CD4-positive, alpha-beta T cell (primary cell): ENCODE measurements at regions of chr3 and their contacts with region 1.

Region 1: DNA sequence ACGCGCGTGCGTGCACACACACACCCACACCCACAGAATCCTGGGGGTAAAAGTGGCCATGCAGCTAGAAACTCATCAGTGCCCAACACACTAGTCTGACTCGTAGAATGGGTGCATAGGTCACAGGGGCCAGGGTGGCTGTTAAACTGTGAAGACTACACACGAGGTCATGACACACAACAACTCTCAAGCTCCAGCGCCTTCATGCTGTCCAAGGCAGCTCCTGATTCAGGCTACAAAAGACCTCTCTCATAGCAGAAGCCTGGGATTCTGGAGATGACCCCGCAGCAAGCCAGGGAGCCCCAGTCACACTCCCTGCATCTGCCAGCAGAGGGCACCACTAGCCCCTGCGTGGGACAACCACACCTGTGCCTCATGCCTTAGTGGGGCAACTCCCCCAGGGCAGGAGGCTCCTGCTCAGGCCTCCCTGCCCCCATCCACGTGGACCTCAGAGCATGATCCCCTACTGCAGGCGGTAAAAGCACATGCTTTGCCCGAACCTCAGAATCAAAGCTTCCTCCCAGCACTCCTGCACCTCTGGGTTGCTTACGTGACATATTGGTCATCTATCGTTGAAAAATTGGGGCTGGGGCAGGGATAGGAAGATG is 93.1 kb downstream of the LRIG1 start:
- DNase-seq: peak; percentile 56 to 82 (median 74)
- ATAC-seq: peak; percentile 86
- H3K4me3 ChIP-seq: no peak overlapping the region
- H3K4me3 Mint-ChIP-seq: no peak overlapping the region
- H3K27ac ChIP-seq: no peak overlapping the region
- H3K27ac Mint-ChIP-seq: no peak overlapping the region
- H3K4me1 ChIP-seq: peaks cover 3% of the 10 kb centered on the region
- H3K4me1 Mint-ChIP-seq: no peaks in the 10 kb centered on the region
- H3K27me3 ChIP-seq: no peaks in the 10 kb centered on the region
- H3K27me3 Mint-ChIP-seq: no peaks in the 10 kb centered on the region
- CTCF ChIP-seq: peak; percentile 90

Region 2: GRCh38 chr3:66365080-66365479 is 42.6 kb before region 1 on chr3:
- CTCF ChIA-PET with region 1: no interaction called
- POLR2A ChIA-PET with region 1: no interaction called
- intact Hi-C with region 1: no loop called
- DNase-seq: no peak
- ATAC-seq: no peak
- H3K4me3 ChIP-seq: no peak overlapping the region
- H3K4me3 Mint-ChIP-seq: no peak overlapping the region
- H3K27ac ChIP-seq: no peak overlapping the region
- H3K27ac Mint-ChIP-seq: no peak overlapping the region
- H3K4me1 ChIP-seq: no peaks in the 10 kb centered on the region
- H3K4me1 Mint-ChIP-seq: no peaks in the 10 kb centered on the region
- H3K27me3 ChIP-seq: no peaks in the 10 kb centered on the region
- H3K27me3 Mint-ChIP-seq: no peaks in the 10 kb centered on the region
- CTCF ChIP-seq: no peak

Region 3: DNA sequence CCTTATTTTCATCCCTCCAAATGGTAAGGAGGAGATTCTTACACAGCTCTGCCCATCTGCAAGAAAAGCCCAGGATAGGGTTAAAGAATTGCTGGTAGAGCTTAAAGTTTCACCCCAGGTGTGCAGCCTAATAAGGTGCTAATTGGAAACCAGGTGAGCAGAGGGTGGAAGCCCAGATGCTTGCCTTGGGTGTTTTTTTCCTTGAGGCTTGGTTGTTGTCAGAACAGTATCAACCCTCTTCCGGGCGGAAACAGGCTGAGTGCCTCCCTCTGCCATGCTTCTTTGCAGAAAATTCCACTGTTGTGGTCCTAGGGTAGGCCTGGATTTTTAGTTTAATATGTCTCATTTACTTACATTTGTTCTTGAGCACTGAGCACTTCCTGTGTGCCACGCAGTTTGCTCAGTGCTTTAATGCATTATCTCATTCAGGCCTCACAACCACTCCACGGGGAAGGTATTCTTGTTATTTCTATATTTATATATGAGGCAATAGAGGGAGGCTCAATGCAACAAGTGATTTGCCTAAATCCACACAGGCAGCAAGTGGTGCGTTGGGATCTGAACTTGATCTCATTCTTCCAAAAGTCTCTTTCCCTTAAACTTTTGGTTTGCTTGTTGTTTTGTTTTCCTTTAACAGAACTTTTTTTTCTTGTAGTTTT is 208.1 kb after region 1 on chr3:
- CTCF ChIA-PET with region 1: no interaction called
- POLR2A ChIA-PET with region 1: no interaction called
- intact Hi-C with region 1: no loop called
- DNase-seq: peak in 1 of 14 experiments; percentile 14
- ATAC-seq: peak; percentile 21
- H3K4me3 ChIP-seq: no peak overlapping the region
- H3K4me3 Mint-ChIP-seq: no peak overlapping the region
- H3K27ac ChIP-seq: no peak overlapping the region
- H3K27ac Mint-ChIP-seq: no peak overlapping the region
- H3K4me1 ChIP-seq: peaks cover 17% of the 10 kb centered on the region
- H3K4me1 Mint-ChIP-seq: peaks cover 21% of the 10 kb centered on the region
- H3K27me3 ChIP-seq: no peaks in the 10 kb centered on the region
- H3K27me3 Mint-ChIP-seq: no peaks in the 10 kb centered on the region
- CTCF ChIP-seq: no peak

Region 4: DNA sequence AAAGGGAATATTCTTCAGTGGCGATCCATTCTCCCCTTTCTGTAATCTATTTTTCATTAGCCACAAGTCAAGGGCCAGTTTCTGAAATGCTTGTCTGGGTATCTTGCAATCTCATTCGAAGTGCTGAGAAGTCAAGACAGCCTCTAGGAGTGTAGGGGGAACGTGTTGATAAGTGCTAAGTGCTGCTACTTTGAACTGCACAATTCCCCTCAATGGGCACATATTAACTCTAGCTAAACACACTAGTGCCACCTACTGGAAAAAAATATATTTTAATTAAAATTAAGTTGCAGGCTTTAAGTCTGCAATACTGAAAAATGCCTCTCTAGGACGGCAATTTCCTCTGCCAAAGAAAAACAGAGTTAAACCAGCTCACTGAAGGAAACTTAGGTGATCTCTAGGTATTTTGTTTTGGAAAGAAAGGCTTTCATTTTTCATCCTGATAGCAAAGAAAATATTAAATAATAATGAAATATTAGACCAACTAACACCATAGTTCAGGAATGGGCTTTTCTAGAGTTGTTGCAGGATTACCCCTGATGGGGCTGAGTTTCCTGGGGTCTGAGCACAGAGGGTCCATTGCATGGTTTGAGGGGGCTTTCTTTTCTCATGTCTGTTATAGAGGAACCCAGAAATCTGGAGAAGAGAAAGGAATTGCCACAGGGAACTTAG is 408.5 kb after region 1 on chr3:
- CTCF ChIA-PET with region 1: interaction called, 4 read pairs
- POLR2A ChIA-PET with region 1: no interaction called
- intact Hi-C with region 1: loop called (anchors 1 kb)
- DNase-seq: peak in 5 of 14 experiments; percentile 5 to 65 (median 63)
- ATAC-seq: peak; percentile 62
- H3K4me3 ChIP-seq: no peak overlapping the region
- H3K4me3 Mint-ChIP-seq: no peak overlapping the region
- H3K27ac ChIP-seq: no peak overlapping the region
- H3K27ac Mint-ChIP-seq: no peak overlapping the region
- H3K4me1 ChIP-seq: no peaks in the 10 kb centered on the region
- H3K4me1 Mint-ChIP-seq: no peaks in the 10 kb centered on the region
- H3K27me3 ChIP-seq: no peaks in the 10 kb centered on the region
- H3K27me3 Mint-ChIP-seq: peaks cover 8% of the 10 kb centered on the region
- CTCF ChIP-seq: peak; percentile 74